ENCODE measurements at regions of chr12 and their contacts with region 1.

Region 1: DNA sequence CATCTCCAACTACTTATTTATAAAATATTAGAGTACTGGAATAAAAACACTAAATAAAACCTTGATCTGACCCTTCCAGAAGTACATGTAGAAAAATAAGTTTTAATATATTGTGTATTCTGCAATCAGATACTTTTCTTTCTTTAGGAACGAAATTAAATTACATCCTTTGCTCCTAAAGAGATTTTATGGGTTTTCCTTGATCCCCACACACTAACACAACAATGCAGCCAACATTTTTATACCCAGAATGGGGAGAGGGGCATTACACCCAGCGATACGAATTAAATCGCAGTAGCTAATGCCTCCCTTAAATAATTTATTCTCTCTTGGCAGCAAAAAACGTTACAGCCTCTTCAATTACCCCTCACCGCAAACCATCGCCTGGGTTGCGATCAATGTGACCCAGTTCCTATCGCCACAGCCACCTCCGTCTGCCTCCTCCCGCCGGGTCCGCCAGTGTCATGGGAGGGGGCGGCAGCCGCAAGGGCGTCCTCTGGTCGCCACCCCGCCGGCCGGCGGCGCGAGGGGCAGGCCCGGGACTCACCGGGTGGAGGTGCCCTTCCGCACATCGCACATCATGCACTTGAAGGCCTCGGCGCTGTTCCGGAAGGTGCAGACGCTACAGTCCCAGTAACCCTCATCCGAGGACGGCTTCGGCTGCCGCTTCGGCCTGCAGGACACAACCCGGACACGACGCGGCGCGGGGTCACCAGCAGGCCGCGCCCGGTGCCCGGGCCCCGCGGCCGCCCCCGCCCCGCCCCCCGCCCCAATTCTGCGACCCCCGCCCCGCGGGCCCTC is 796 bp downstream of the YAF2 start:
- DNase-seq: peak; percentile 68
- H3K4me3 ChIP-seq: peak overlapping the region; percentile 39 to 98 (median 70)
- H3K27ac ChIP-seq: peak overlapping the region; percentile 41
- H3K4me1 ChIP-seq: peaks cover 13% of the 10 kb centered on the region
- H3K27me3 ChIP-seq: no peaks in the 10 kb centered on the region
- CTCF ChIP-seq: peak; percentile 29 to 53
- POLR2A ChIP-seq: no peak

Region 2: GRCh38 chr12:42144408-42145196 is 92.7 kb before region 1 on chr12 and contains the start of gene GXYLT1:
- CTCF ChIA-PET with region 1: interaction called, 3 read pairs
- POLR2A ChIA-PET with region 1: no interaction called
- dilution Hi-C with region 1: no loop called
- intact Hi-C with region 1: loop called (anchors 1 kb)
- DNase-seq: peak; percentile 95
- H3K4me3 ChIP-seq: peak within 1 kb of the TSS; percentile 86 to 93 (median 89)
- H3K27ac ChIP-seq: peak within 1 kb of the TSS; percentile 62
- H3K4me1 ChIP-seq: peaks cover 14% of the 10 kb centered on the region
- H3K27me3 ChIP-seq: no peaks in the 10 kb centered on the region
- CTCF ChIP-seq: no peak
- POLR2A ChIP-seq: peak; percentile 54
- total RNA-seq, gene GXYLT1: 23.0 and 23.4 TPM in 2 replicates

Region 3: DNA sequence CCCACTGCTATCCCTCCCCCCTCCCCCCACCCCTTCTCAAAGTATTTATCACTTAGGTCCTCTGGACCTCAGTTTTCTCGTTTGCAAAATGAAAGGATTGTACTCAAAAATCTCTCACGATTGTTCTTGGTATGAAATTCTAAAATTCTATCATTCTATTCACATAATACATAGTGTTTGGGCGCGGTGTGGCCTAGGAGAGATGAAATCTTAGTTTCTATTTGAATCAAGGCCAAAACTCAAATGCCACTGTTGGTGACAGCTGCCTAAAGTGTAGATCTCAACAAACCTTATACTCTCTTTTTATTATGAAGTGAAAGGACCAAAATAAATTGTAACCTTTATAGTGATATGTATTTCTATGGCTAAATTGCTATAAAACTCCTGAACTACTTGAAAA is 24.5 kb after region 1 on chr12:
- CTCF ChIA-PET with region 1: no interaction called
- POLR2A ChIA-PET with region 1: interaction called, 13 read pairs
- dilution Hi-C with region 1: no loop called
- intact Hi-C with region 1: no loop called
- DNase-seq: no peak
- H3K4me3 ChIP-seq: no peak overlapping the region
- H3K27ac ChIP-seq: no peak overlapping the region
- H3K4me1 ChIP-seq: no peaks in the 10 kb centered on the region
- H3K27me3 ChIP-seq: no peaks in the 10 kb centered on the region
- CTCF ChIP-seq: no peak
- POLR2A ChIP-seq: no peak

Region 4: GRCh38 chr12:42325653-42326474 is 88.6 kb after region 1 on chr12 and contains the starts of genes PPHLN1 and ZCRB1:
- CTCF ChIA-PET with region 1: no interaction called
- POLR2A ChIA-PET with region 1: no interaction called
- dilution Hi-C with region 1: no loop called
- intact Hi-C with region 1: loop called (anchors 2 kb)
- DNase-seq: peak; percentile 69
- H3K4me3 ChIP-seq: peak within 1 kb of the TSS; percentile 64 to 97 (median 90)
- H3K27ac ChIP-seq: peak within 1 kb of the TSS; percentile 58
- H3K4me1 ChIP-seq: peaks cover 21% of the 10 kb centered on the region
- H3K27me3 ChIP-seq: no peaks in the 10 kb centered on the region
- CTCF ChIP-seq: no peak
- POLR2A ChIP-seq: peak; percentile 85
- total RNA-seq, gene PPHLN1: 58.0 and 62.2 TPM in 2 replicates
- total RNA-seq, gene ZCRB1: 52.9 and 55.3 TPM in 2 replicates

Region 5: DNA sequence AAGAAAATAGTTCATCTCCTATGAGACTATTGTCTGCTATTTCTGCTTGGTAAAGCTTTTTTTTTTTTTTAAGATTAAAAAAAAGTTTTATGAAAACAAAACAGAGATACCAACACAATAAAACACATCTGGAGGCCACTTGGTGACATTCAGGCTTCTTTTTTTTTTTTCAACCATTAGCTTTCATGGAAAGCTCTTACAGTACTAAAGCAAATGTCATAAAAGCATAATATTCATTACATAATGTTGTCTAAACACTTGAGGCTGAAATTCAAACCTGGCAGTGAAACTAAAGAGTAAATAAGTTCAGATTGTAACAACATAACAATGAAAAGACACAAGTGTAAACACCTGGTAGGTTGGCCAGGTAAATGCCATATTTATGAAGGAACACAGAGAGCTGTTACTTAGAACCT is 337.6 kb after region 1 on chr12:
- CTCF ChIA-PET with region 1: no interaction called
- POLR2A ChIA-PET with region 1: no interaction called
- dilution Hi-C with region 1: no loop called
- intact Hi-C with region 1: loop called (anchors 10 kb)
- DNase-seq: peak; percentile 37
- H3K4me3 ChIP-seq: no peak overlapping the region
- H3K27ac ChIP-seq: peak overlapping the region; percentile 35
- H3K4me1 ChIP-seq: peaks cover 59% of the 10 kb centered on the region
- H3K27me3 ChIP-seq: no peaks in the 10 kb centered on the region
- CTCF ChIP-seq: no peak
- POLR2A ChIP-seq: no peak

Measured in endothelial cell of umbilical vein (primary cell).